ENCODE measurements at regions of chr9 and their contacts with region 1.

Region 1: GRCh38 chr9:25377039-25377438 is 301.2 kb downstream of the TUSC1 start:
- DNase-seq: no peak
- ATAC-seq: no peak
- H3K4me3 ChIP-seq: no peak overlapping the region
- H3K4me3 Mint-ChIP-seq: no peak overlapping the region
- H3K27ac ChIP-seq: no peak overlapping the region
- H3K27ac Mint-ChIP-seq: no peak overlapping the region
- H3K4me1 ChIP-seq: no peaks in the 10 kb centered on the region
- H3K4me1 Mint-ChIP-seq: no peaks in the 10 kb centered on the region
- H3K27me3 ChIP-seq: no peaks in the 10 kb centered on the region
- H3K27me3 Mint-ChIP-seq: no peaks in the 10 kb centered on the region
- CTCF ChIP-seq: no peak

Region 2: GRCh38 chr9:25322143-25322542 is 54.9 kb before region 1 on chr9:
- intact Hi-C with region 1: loop called (anchors 10 kb)
- DNase-seq: no peak
- ATAC-seq: no peak
- H3K4me3 ChIP-seq: no peak overlapping the region
- H3K4me3 Mint-ChIP-seq: no peak overlapping the region
- H3K27ac ChIP-seq: no peak overlapping the region
- H3K27ac Mint-ChIP-seq: no peak overlapping the region
- H3K4me1 ChIP-seq: no peaks in the 10 kb centered on the region
- H3K4me1 Mint-ChIP-seq: no peaks in the 10 kb centered on the region
- H3K27me3 ChIP-seq: no peaks in the 10 kb centered on the region
- H3K27me3 Mint-ChIP-seq: no peaks in the 10 kb centered on the region
- CTCF ChIP-seq: no peak

Measured in natural killer cell (primary cell).